GM10248 (cell line): ENCODE measurements at regions of chr5 and their contacts with region 1.

Region 1: GRCh38 chr5:82225525-82226172 is 52.5 kb downstream of the RPS23 start:
- DNase-seq: peak; percentile 57
- CTCF ChIP-seq: peak; percentile 69

Region 2: GRCh38 chr5:82107267-82107666 is 118.4 kb before region 1 on chr5:
- CTCF ChIA-PET with region 1: interaction called, 13 read pairs
- POLR2A ChIA-PET with region 1: no interaction called
- DNase-seq: no peak
- CTCF ChIP-seq: peak; percentile 45

Region 3: DNA sequence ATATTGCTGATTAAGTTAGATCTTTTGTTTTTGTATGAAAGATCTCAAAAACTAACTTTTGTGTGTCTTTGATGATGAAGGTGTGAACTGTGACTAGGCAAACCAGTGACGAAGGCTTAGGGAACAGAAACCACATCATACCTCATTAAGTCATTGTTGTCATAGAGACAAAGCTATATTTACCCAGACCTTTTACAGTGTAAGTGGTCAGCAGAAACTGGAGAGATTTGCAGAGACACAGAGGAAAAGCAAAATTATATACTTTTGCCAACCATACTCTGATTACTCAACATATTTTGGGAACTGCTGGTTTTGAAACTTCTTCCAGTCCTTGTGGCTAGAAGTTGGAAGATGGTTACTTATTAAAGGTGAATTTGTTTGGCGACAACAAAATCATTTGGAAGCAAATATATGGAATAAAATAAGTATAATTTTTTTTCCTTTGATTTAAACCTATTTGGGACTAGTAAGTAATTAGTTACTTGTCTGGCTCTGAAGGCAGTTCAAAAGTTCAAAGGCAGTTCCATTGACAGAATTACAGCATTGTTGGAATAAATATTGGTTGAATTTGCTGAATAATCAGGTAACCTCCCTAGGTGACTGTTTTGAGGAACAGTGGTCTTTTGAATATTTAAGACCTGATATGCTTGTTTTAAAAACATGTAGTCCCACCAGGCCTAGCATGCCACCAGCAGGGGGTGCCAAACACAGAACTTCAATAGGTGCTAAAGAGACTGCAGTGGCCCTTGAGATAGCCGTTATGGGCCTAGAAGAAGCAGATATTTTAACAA is 51.3 kb before region 1 on chr5:
- CTCF ChIA-PET with region 1: interaction called, 28 read pairs
- POLR2A ChIA-PET with region 1: no interaction called
- DNase-seq: peak; percentile 70
- CTCF ChIP-seq: peak; percentile 66

Region 4: GRCh38 chr5:82185851-82186250 is 39.8 kb before region 1 on chr5:
- CTCF ChIA-PET with region 1: interaction called, 17 read pairs
- POLR2A ChIA-PET with region 1: no interaction called
- DNase-seq: no peak
- CTCF ChIP-seq: no peak

Region 5: DNA sequence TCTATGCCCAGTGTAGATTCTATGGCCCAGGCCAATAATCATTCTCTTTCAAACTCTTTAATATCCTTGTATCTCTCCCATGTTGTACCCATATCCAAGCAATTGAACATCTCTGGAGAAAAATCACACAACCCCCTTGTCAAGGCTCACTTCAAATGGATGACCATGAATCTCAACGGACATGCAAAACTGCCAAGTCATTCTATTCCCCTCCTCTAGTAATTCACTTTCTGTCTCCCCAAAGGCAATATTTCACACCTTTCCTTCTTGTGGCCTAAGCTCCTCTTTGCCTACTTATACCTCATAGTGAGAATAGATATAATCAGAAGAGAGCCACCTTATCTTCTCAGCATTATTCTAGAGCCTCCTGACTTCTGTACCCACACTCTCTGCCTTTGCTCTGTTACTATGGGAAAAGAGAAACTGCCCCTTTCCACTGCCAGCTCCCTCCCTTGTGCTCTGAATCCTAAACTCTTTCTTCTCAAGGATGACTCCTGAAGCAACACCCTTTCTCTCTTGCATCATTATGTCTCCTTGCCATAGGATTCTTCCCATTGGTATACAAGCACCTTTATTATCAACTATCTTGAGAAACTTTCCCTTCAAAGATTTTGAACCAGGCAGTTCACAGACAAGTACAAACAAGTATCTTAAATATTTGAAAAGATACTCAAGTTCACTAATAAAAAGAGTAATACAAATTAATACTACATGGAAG is 13.6 kb before region 1 on chr5:
- CTCF ChIA-PET with region 1: interaction called, 35 read pairs
- POLR2A ChIA-PET with region 1: interaction called, 5 read pairs
- DNase-seq: no peak
- CTCF ChIP-seq: no peak

Region 6: GRCh38 chr5:82244854-82245635 is 19.4 kb after region 1 on chr5:
- CTCF ChIA-PET with region 1: interaction called, 11 read pairs
- POLR2A ChIA-PET with region 1: no interaction called
- DNase-seq: no peak
- CTCF ChIP-seq: no peak

Region 7: GRCh38 chr5:82295144-82295543 is 69.5 kb after region 1 on chr5:
- CTCF ChIA-PET with region 1: no interaction called
- POLR2A ChIA-PET with region 1: no interaction called
- DNase-seq: no peak
- CTCF ChIP-seq: no peak

Region 8: DNA sequence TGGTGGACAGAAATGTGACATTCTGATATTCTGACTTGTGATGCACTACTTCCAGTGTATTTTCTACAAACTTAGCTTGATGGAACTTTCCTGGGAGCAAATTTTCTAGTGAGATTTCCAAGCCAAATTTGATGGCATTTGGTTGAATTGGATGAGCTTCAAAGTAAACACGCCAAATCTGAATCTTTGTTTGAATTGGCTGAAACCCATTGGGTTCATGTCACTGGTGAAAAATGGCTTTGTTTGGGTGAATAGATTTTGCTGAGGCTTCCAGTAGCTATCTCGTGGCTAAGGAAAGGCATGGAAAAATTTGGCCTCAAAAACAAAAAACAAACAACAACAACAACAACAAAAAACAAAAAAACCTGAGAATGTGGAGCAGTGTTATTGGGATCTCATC is 323.6 kb after region 1 on chr5:
- CTCF ChIA-PET with region 1: no interaction called
- POLR2A ChIA-PET with region 1: no interaction called
- DNase-seq: no peak
- CTCF ChIP-seq: no peak